Panc1 (cell line): ENCODE measurements at regions of chr4 and their contacts with region 1.

Region 1: GRCh38 chr4:155787113-155787710 is 28.4 kb downstream of the GUCY1B1 start:
- DNase-seq: peak; percentile 25
- ATAC-seq: peak; percentile 91
- H3K4me3 ChIP-seq: no peak overlapping the region
- H3K27ac ChIP-seq: no peak overlapping the region
- H3K4me1 ChIP-seq: no peaks in the 10 kb centered on the region
- H3K27me3 ChIP-seq: no peaks in the 10 kb centered on the region
- CTCF ChIP-seq: peak; percentile 70; the same call in 1 of the 2 replicates

Region 2: DNA sequence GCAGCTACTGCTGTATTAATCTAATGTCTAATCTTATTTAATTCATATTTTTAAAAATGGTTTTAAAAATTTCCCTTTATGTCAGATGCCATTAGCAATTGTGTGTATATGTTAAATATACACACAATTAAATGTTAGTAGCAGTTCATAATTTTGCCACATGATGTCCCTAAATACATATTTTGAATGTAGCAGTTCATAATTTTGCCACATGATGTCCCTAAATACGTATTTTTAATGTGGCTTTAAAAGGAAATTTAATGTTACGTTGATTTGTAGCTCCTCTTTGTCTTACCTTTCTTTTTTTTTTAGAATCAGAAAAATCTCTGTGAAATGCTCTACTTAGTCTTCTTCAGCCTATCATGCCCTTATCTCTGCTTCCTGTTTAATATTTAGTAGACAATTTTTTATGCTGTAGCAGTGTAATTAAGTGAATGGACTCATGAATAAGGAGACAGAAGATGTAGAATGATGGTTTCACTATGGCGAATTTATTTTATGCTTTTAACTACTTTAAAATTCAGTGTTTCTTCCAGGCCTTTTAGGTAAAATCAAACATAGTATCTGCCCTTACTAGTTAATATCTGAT is 980.1 kb before region 1 on chr4:
- CTCF ChIA-PET with region 1: no interaction called
- POLR2A ChIA-PET with region 1: no interaction called
- in situ Hi-C with region 1: no loop called
- intact Hi-C with region 1: loop called (anchors 10 kb)
- DNase-seq: peak; percentile 13
- ATAC-seq: no peak
- H3K4me3 ChIP-seq: no peak overlapping the region
- H3K27ac ChIP-seq: no peak overlapping the region
- H3K4me1 ChIP-seq: no peaks in the 10 kb centered on the region
- H3K27me3 ChIP-seq: no peaks in the 10 kb centered on the region
- CTCF ChIP-seq: peak; percentile 47; the same call in 1 of the 2 replicates

Region 3: GRCh38 chr4:155403886-155404285 is 383.3 kb before region 1 on chr4:
- CTCF ChIA-PET with region 1: no interaction called
- POLR2A ChIA-PET with region 1: no interaction called
- in situ Hi-C with region 1: no loop called
- intact Hi-C with region 1: loop called (anchors 1 kb)
- DNase-seq: peak; percentile 20
- ATAC-seq: peak; percentile 63; the same call in 1 of the 2 replicates
- H3K4me3 ChIP-seq: no peak overlapping the region
- H3K27ac ChIP-seq: no peak overlapping the region
- H3K4me1 ChIP-seq: no peaks in the 10 kb centered on the region
- H3K27me3 ChIP-seq: no peaks in the 10 kb centered on the region
- CTCF ChIP-seq: peak; percentile 29; the same call in 1 of the 2 replicates

Region 4: GRCh38 chr4:155442267-155443105 is 344.7 kb before region 1 on chr4:
- CTCF ChIA-PET with region 1: interaction called, 4 read pairs
- POLR2A ChIA-PET with region 1: no interaction called
- in situ Hi-C with region 1: no loop called
- intact Hi-C with region 1: loop called (anchors 2 kb)
- DNase-seq: peak; percentile 35
- ATAC-seq: peak; percentile 78; the same call in 1 of the 2 replicates
- H3K4me3 ChIP-seq: no peak overlapping the region
- H3K27ac ChIP-seq: no peak overlapping the region
- H3K4me1 ChIP-seq: no peaks in the 10 kb centered on the region
- H3K27me3 ChIP-seq: no peaks in the 10 kb centered on the region
- CTCF ChIP-seq: peak; percentile 87

Region 5: DNA sequence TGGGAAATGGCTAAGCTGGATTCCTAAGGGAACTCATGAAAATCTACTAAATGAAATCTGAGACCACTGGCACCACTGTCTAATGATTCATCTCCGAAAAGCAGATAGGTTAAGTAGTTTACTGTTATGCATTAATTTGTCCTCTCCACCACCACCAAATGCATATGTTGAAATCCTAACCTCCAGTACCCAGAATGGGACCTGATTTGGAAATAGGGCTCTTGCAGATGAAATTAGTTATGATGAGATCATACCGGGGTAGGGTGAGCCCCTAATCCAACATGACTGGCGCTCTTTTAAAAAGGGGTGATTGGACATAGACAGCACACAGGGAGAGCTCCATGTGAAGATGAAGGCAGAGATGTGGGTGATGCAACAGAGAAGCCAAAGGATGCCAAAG is 245.5 kb before region 1 on chr4:
- CTCF ChIA-PET with region 1: interaction called, 12 read pairs
- POLR2A ChIA-PET with region 1: no interaction called
- in situ Hi-C with region 1: no loop called
- intact Hi-C with region 1: no loop called
- DNase-seq: no peak
- ATAC-seq: no peak
- H3K4me3 ChIP-seq: no peak overlapping the region
- H3K27ac ChIP-seq: no peak overlapping the region
- H3K4me1 ChIP-seq: no peaks in the 10 kb centered on the region
- H3K27me3 ChIP-seq: no peaks in the 10 kb centered on the region
- CTCF ChIP-seq: no peak